HepG2 (cell line): ENCODE measurements at regions of chr1 and their contacts with region 1.

Region 1: GRCh38 chr1:8169364-8170058 is 143.4 kb upstream of the ERRFI1 start:
- DNase-seq: peak; percentile 93
- ATAC-seq: peak; percentile 90
- H3K4me3 ChIP-seq: peak overlapping the region in 1 of 3 experiments; percentile 42; a peak in 2 of 6 replicates
- H3K27ac ChIP-seq: peak overlapping the region; percentile 97
- H3K4me1 ChIP-seq: peaks cover 76% of the 10 kb centered on the region
- H3K27me3 ChIP-seq: no peaks in the 10 kb centered on the region
- CTCF ChIP-seq: no peak
- EP300 ChIP-seq: peak in 1 of 2 experiments; percentile 86; a peak in 2 of 4 replicates
- POLR2A ChIP-seq: peak in 1 of 2 experiments; percentile 43; a peak in 3 of 4 replicates
- RAD21 ChIP-seq: no peak

Region 2: DNA sequence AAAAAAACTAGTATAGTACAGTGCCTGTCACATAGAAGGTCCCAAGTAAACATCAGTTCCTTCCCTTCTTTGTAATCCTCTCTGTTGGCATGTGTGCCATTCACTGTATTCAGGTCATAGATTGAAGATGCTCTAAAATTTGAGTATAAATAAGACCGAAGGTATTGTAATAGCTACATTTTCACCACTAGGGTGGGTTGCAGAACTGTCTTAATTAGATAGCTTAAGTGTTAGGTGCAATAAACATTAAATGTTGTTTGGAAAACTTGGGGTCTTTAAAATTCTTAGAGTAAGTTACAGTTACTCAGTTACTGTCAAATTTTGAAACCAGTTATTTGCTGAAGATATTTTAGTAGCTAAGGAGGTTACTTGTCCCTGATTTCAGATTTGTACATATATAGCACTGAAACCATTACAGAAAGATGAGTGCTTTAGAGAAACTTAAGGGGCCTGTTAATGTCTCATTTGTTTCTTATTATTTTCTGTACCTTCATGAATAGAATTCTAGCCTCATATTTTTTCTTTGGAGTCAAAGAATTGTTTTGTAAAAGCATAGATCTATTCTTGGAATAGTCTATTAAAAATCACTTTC is 361.2 kb before region 1 on chr1:
- CTCF ChIA-PET with region 1: no interaction called
- POLR2A ChIA-PET with region 1: no interaction called
- in situ Hi-C with region 1: no loop called
- intact Hi-C with region 1: no loop called
- DNase-seq: peak; percentile 30
- ATAC-seq: peak; percentile 36; the same call in 1 of the 3 replicates
- H3K4me3 ChIP-seq: no peak overlapping the region
- H3K27ac ChIP-seq: no peak overlapping the region
- H3K4me1 ChIP-seq: no peaks in the 10 kb centered on the region
- H3K27me3 ChIP-seq: no peaks in the 10 kb centered on the region
- CTCF ChIP-seq: peak; percentile 47
- EP300 ChIP-seq: no peak
- POLR2A ChIP-seq: no peak
- RAD21 ChIP-seq: no peak

Region 3: GRCh38 chr1:8015036-8015808 is 154.3 kb before region 1 on chr1:
- CTCF ChIA-PET with region 1: no interaction called
- POLR2A ChIA-PET with region 1: interaction called, 11 read pairs
- in situ Hi-C with region 1: no loop called
- intact Hi-C with region 1: no loop called
- DNase-seq: peak; percentile 66
- ATAC-seq: peak; percentile 18; the same call in 2 of the 3 replicates
- H3K4me3 ChIP-seq: no peak overlapping the region; a peak in 1 of 6 replicates
- H3K27ac ChIP-seq: peak overlapping the region; percentile 28
- H3K4me1 ChIP-seq: peaks cover 80% of the 10 kb centered on the region
- H3K27me3 ChIP-seq: no peaks in the 10 kb centered on the region
- CTCF ChIP-seq: peak; percentile 50; the same call in 1 of the 2 replicates
- EP300 ChIP-seq: 0 out of 4 replicates have a peak, but pooled peaks of 1 of the 2 experiments have one; percentile 12
- POLR2A ChIP-seq: peak; percentile 40 to 45; a peak in 3 of 4 replicates
- RAD21 ChIP-seq: peak; percentile 54; the same call in 1 of the 2 replicates

Region 4: DNA sequence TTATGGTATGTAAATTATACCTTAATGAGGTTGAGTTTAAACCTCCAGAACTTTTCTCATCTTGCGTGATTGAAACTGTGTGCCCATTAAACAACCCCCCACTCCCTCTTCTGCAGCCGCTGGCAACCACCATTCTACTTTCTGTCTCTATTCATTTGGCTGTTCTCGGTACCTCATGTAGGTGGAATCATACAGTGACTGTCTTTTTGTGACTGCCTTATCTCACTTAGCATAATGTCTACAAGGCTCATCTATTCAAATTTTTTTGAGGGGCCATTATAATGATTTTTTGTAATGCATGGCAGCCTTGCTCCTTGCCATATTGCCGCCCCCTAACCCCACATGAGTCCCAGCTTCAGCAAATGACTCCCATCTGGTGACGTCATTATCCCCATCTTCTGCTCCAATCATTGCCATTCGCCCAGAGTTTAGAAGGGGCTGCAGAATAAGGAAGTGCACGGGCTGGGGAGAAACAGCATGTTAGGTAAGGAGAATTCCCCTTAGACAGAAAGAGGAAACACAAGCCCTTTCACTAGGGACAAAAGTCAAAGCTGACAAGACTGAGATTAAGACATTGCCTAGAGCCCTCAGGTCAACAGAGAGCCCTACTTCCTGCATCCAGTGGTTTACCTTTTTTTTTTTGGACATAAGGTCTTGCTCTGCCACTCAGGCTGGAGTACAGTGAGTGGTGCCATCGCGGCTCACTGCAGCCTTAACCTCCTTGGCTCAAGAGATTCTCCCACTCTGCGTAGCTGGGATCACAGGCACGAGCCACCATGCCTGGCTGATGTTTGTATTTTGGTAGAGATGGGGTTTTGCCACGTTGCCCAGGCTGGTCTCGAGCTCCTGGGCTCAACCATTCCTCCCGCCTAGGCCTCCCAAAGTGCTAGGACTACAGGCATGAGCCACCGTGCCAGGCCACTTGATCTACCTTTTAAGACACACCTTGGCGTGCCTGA is 65.0 kb before region 1 on chr1:
- CTCF ChIA-PET with region 1: no interaction called
- POLR2A ChIA-PET with region 1: no interaction called
- in situ Hi-C with region 1: no loop called
- intact Hi-C with region 1: no loop called
- DNase-seq: no peak
- ATAC-seq: no peak
- H3K4me3 ChIP-seq: no peak overlapping the region
- H3K27ac ChIP-seq: no peak overlapping the region
- H3K4me1 ChIP-seq: no peaks in the 10 kb centered on the region
- H3K27me3 ChIP-seq: no peaks in the 10 kb centered on the region
- CTCF ChIP-seq: no peak
- EP300 ChIP-seq: no peak
- POLR2A ChIP-seq: no peak
- RAD21 ChIP-seq: no peak

Region 5: DNA sequence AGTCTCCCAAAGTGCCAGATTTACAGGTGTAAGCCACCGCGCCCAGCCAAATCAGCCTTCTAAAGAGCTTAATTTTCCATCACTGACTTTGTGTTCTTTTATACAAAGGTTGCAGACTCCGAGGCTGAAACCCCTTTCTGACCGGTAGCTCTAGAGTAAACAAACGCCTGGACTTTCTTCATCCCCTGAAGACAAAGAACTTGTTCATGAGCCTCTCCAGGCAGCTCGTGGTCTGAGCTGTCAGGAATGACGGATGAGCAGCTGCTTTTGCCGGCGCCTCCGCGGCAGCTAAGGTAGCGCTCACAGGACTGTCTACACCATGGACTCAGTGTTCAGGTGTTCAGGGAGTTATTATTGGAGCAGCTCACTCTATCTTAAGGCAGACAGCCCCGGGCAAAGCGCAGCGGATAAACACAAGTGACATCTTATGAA is 14.9 kb before region 1 on chr1:
- CTCF ChIA-PET with region 1: no interaction called
- POLR2A ChIA-PET with region 1: interaction called, 106 read pairs
- in situ Hi-C with region 1: no loop called
- intact Hi-C with region 1: no loop called
- DNase-seq: peak; percentile 99
- ATAC-seq: peak; percentile 97
- H3K4me3 ChIP-seq: peak overlapping the region in 2 of 3 experiments; percentile 15 to 31; a peak in 2 of 6 replicates
- H3K27ac ChIP-seq: peak overlapping the region; percentile 88
- H3K4me1 ChIP-seq: peaks cover 82% of the 10 kb centered on the region
- H3K27me3 ChIP-seq: no peaks in the 10 kb centered on the region
- CTCF ChIP-seq: no peak
- EP300 ChIP-seq: peak; percentile 89 to 97; a peak in 3 of 4 replicates
- POLR2A ChIP-seq: peak in 1 of 2 experiments; percentile 16; a peak in 1 of 4 replicates
- RAD21 ChIP-seq: peak; percentile 44; the same call in 1 of the 2 replicates

Region 6: DNA sequence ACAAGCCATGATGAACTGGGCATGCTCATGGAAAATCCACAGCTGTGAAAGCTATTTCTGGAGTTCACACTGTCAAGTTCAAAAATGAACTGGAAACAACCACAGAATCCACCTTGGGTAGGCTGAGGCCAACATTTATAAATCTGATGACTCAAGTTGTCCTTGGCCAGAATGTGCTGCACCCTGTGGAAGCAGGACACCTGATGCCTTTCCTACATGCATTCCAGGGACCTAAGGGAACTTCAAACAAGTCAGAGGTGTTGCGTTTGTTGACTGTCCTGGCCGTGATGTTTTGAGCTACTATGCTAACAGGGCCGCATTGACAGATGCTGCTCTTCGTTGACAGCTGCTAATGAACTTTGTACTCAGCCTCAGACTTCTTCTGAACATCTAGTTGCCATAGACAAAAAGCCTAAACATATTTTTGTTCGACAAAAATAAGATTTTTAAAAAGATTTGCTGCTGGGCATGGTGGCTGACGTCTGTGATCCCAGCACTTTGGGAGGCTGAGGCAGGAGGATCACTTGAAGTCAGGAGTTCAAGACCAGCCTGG is 20.5 kb after region 1 on chr1:
- CTCF ChIA-PET with region 1: no interaction called
- POLR2A ChIA-PET with region 1: interaction called, 24 read pairs
- in situ Hi-C with region 1: no loop called
- intact Hi-C with region 1: no loop called
- DNase-seq: peak; percentile 100
- ATAC-seq: peak; percentile 100
- H3K4me3 ChIP-seq: no peak overlapping the region
- H3K27ac ChIP-seq: peak overlapping the region; percentile 74
- H3K4me1 ChIP-seq: peaks cover 78% of the 10 kb centered on the region
- H3K27me3 ChIP-seq: no peaks in the 10 kb centered on the region
- CTCF ChIP-seq: peak; percentile 8; the same call in 1 of the 2 replicates
- EP300 ChIP-seq: peak; percentile 87 to 97
- POLR2A ChIP-seq: peak in 1 of 2 experiments; percentile 47; a peak in 1 of 4 replicates
- RAD21 ChIP-seq: peak; percentile 65

Region 7: GRCh38 chr1:8211589-8212442 is 42.3 kb after region 1 on chr1:
- CTCF ChIA-PET with region 1: no interaction called
- POLR2A ChIA-PET with region 1: interaction called, 14 read pairs
- in situ Hi-C with region 1: no loop called
- intact Hi-C with region 1: no loop called
- DNase-seq: peak; percentile 97
- ATAC-seq: peak; percentile 94
- H3K4me3 ChIP-seq: no peak overlapping the region
- H3K27ac ChIP-seq: peak overlapping the region; percentile 87
- H3K4me1 ChIP-seq: peaks cover 81% of the 10 kb centered on the region
- H3K27me3 ChIP-seq: no peaks in the 10 kb centered on the region
- CTCF ChIP-seq: peak; percentile 36; the same call in 1 of the 2 replicates
- EP300 ChIP-seq: peak in 1 of 2 experiments; percentile 98; a peak in 3 of 4 replicates
- POLR2A ChIP-seq: peak; percentile 59 to 71
- RAD21 ChIP-seq: no peak